AG04449 (cell line): ENCODE measurements at regions of chr19 and their contacts with region 1.

Region 1: GRCh38 chr19:49473868-49474544 is at the start of gene FLT3LG:
- DNase-seq: no peak
- H3K4me3 ChIP-seq: peak within 1 kb of the TSS; percentile 75
- CTCF ChIP-seq: peak; percentile 99

Region 2: GRCh38 chr19:49451430-49452181 is 22.4 kb before region 1 on chr19 and contains the start of gene PIH1D1:
- CTCF ChIA-PET with region 1: interaction called, 40 read pairs
- POLR2A ChIA-PET with region 1: no interaction called
- DNase-seq: peak; percentile 95
- H3K4me3 ChIP-seq: peak within 1 kb of the TSS; percentile 96
- CTCF ChIP-seq: peak; percentile 11

Region 3: DNA sequence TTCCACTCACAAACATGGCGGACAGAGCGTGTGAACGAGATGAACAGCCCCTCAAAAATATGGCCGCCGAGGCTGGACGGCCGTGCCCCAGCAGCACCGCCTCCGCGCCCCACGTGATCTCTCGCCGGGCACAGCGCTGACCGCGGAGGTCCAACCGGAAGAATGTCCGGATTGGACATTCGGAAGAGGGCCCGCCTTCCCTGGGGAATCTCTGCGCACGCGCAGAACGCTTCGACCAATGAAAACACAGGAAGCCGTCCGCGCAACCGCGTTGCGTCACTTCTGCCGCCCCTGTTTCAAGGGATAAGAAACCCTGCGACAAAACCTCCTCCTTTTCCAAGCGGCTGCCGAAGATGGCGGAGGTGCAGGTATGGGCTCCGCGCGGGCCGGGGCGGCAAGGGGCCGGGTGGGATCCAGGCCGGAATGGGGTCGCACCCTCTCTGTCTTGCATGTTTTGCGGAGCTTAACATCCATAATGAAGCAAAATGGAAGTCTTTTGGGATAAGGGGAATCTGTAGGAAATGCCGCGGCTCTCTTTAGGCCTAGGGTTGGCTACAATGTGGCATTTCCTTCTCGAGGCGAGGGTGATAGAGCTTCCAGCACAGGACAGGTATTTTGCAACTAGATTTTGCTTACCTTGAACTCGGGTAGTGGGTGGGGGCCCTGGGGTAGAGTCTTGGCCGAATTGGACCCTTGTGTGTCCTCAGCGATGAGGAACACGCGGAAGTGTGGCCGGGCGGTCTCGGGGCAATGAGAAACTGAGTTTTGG is 13.5 kb after region 1 on chr19 and contains the start of gene RPL13A:
- CTCF ChIA-PET with region 1: interaction called, 33 read pairs
- POLR2A ChIA-PET with region 1: interaction called, 11 read pairs
- DNase-seq: peak; percentile 91
- H3K4me3 ChIP-seq: peak within 1 kb of the TSS; percentile 90
- CTCF ChIP-seq: no peak

Region 4: GRCh38 chr19:49515767-49516166 is 41.8 kb after region 1 on chr19:
- CTCF ChIA-PET with region 1: no interaction called
- POLR2A ChIA-PET with region 1: no interaction called
- DNase-seq: no peak
- H3K4me3 ChIP-seq: no peak overlapping the region
- CTCF ChIP-seq: no peak

Region 5: GRCh38 chr19:49533551-49534488 is 59.8 kb after region 1 on chr19:
- CTCF ChIA-PET with region 1: no interaction called
- POLR2A ChIA-PET with region 1: no interaction called
- DNase-seq: no peak
- H3K4me3 ChIP-seq: peak overlapping the region; percentile 56
- CTCF ChIP-seq: no peak